Naive thymus-derived CD8-positive, alpha-beta T cell (primary cell): ENCODE measurements at regions of chr2 and their contacts with region 1.

Region 1: DNA sequence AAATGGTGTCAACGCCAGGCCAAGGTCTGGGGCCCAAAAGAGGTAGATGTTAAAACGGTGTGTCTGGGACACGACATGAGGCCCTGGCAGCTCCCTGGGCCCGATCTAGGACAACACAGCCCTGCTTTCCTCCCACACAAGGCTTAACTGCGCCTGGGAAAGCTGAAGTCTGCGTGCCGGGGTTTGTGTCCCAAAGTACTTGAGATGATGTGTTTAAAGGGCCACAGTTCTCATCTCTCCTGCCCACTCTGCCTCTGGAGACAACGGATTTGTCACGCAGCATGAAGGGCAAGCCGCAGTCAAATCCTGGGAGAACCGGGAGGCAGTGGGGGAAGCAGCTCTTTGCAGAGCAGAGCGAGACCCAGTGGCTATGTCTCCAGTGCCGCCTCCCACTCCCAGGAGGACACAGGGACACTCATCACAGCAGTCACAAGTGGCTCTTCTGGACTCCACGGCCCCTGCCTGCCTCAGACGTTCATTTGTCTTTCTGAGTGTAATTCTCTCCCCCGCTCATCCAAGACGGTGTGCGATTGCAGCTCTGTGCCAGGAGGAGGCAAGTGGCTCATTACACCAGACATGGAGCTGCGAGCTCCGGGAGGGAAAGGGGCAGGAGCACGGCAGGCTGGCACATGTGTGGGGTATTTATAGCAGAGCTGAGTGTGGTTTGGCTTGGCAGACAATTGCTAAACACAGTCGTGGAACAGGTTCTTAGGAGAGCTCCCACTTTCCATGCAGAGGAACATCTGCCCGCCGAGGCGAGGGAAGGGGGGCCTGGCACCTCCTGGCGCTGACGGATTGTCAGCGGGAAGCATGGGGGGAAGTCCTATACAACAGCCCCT is 57.7 kb upstream of the SEMA4C start:
- DNase-seq: no peak
- ATAC-seq: no peak
- H3K4me3 Mint-ChIP-seq: no peak overlapping the region
- H3K27ac Mint-ChIP-seq: peak overlapping the region in 2 of 10 donors; percentile 7 to 27
- H3K4me1 Mint-ChIP-seq: peaks cover 20 to 47% (median 29%) of the 10 kb centered on the region in 4 donors
- H3K27me3 Mint-ChIP-seq: peaks cover 0 to 1% (median 0%) of the 10 kb centered on the region in 5 donors

Region 2: GRCh38 chr2:96868555-96869280 is 58.9 kb before region 1 on chr2:
- POLR2A ChIA-PET with region 1: interaction called, 62 read pairs
- DNase-seq: peak; percentile 43 to 82 (median 56)
- ATAC-seq: peak; percentile 25 to 37
- H3K4me3 Mint-ChIP-seq: peak overlapping the region; percentile 81 to 93 (median 86)
- H3K27ac Mint-ChIP-seq: peak overlapping the region in 7 of 10 donors; percentile 79 to 89 (median 87)
- H3K4me1 Mint-ChIP-seq: peaks cover 16 to 47% (median 39%) of the 10 kb centered on the region in 4 donors
- H3K27me3 Mint-ChIP-seq: no peaks in the 10 kb centered on the region

Region 3: DNA sequence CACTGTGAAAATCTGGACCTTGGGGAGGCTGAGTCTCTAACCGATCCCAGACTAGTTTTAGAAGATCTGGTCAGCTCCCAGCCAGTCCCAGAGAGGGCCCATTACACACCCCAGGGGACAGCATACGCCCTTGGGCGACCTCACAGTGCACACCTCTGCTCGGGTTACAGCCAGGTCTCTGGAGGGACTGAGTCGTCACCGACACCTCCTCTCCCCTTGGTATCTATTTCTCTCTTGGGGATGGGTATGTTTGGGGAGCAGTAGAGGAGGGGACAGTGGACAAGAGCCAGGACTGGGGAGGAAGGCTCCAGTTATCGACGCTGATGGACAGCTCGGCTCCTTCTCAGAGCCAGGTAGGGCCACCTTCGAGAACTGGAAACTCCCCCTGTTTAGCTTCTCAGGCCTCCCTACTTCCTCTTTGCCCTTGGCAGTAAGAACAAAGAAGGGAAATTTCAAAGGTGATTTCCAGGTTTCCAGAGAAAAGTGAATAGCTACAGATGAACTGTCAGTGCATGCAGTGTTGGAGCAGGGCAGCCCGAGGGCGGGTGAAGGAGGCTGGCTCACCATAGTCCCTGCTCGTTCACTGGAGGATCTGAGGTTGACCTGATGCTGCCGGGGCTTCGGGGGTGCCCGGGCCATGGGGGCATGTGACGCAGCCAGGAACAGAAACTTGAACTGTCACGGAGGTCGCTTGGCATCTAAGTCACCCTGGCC is 53.3 kb before region 1 on chr2:
- POLR2A ChIA-PET with region 1: interaction called, 62 read pairs
- DNase-seq: no peak
- ATAC-seq: no peak
- H3K4me3 Mint-ChIP-seq: peak overlapping the region in 2 of 10 donors; percentile 2 to 34
- H3K27ac Mint-ChIP-seq: peak overlapping the region in 9 of 10 donors; percentile 49 to 92 (median 85)
- H3K4me1 Mint-ChIP-seq: peaks cover 12 to 44% (median 36%) of the 10 kb centered on the region in 4 donors
- H3K27me3 Mint-ChIP-seq: no peaks in the 10 kb centered on the region

Region 4: DNA sequence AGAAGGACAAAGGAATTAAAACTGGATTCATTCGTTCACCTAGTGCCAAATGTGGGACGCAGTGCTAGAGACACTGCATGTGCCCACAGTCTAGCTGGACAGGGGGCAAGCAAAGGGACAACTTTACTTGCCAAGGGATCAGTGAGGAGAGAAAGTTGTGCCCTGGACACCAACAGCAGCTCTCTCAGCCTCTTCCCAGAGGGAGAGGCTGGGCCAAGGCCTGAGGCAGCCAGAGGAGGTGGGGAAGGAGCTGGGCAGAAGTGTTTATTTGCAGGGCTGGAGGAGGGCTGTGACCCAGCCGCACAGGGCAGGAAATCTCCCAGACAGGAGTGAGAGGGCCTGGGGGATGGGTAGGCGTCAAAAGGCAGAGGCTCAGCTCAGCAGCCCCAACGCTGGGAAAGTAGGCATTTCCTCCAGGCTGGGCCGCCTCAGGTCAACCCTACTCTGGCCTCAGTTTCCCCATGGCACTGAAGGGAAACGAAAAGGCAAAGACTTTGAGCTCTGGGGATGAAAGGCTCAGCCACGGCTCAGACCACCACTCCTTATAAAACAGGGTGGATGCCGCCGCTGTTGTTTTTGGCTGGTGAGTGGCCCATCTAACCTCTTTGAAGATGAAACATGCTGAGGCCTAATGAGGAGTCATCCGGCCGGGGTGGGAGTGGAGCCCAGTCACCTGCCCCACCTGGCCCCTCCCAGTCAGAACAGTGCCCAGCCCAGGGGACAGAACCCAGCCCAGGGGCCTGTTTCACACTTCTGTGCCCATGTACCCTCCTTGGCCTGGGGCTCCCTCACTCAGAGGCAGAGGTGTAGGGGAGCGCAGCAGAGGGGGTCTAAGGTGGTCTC is 35.9 kb before region 1 on chr2:
- POLR2A ChIA-PET with region 1: interaction called, 12 read pairs
- DNase-seq: peak in 1 of 10 donors; percentile 47
- ATAC-seq: peak; percentile 74 to 82
- H3K4me3 Mint-ChIP-seq: peak overlapping the region in 9 of 10 donors; percentile 1 to 72 (median 42)
- H3K27ac Mint-ChIP-seq: peak overlapping the region; percentile 4 to 80 (median 54)
- H3K4me1 Mint-ChIP-seq: peaks cover 35 to 62% (median 58%) of the 10 kb centered on the region in 4 donors
- H3K27me3 Mint-ChIP-seq: no peaks in the 10 kb centered on the region

Region 5: GRCh38 chr2:96913398-96914202 is 14.0 kb before region 1 on chr2:
- POLR2A ChIA-PET with region 1: interaction called, 79 read pairs
- DNase-seq: peak; percentile 26 to 78 (median 44)
- ATAC-seq: peak; percentile 82 to 85
- H3K4me3 Mint-ChIP-seq: peak overlapping the region; percentile 73 to 95 (median 88)
- H3K27ac Mint-ChIP-seq: peak overlapping the region; percentile 87 to 98 (median 96)
- H3K4me1 Mint-ChIP-seq: peaks cover 37 to 79% (median 66%) of the 10 kb centered on the region in 4 donors
- H3K27me3 Mint-ChIP-seq: no peaks in the 10 kb centered on the region

Region 6: GRCh38 chr2:96940001-96940615 is 12.5 kb after region 1 on chr2:
- POLR2A ChIA-PET with region 1: interaction called, 41 read pairs
- DNase-seq: no peak
- ATAC-seq: no peak
- H3K4me3 Mint-ChIP-seq: peak overlapping the region in 5 of 10 donors; percentile 8 to 86 (median 78)
- H3K27ac Mint-ChIP-seq: peak overlapping the region in 7 of 10 donors; percentile 0 to 98 (median 72)
- H3K4me1 Mint-ChIP-seq: peaks cover 12 to 47% (median 38%) of the 10 kb centered on the region in 4 donors
- H3K27me3 Mint-ChIP-seq: peaks cover 0 to 2% (median 0%) of the 10 kb centered on the region in 5 donors